ENCODE measurements at regions of chr3 and their contacts with region 1.

Region 1: GRCh38 chr3:31384117-31384516 is 148.6 kb upstream of the STT3B start:
- DNase-seq: no peak
- H3K4me3 ChIP-seq: no peak overlapping the region
- H3K27ac ChIP-seq: no peak overlapping the region
- H3K4me1 ChIP-seq: no peaks in the 10 kb centered on the region
- H3K27me3 ChIP-seq: no peaks in the 10 kb centered on the region
- CTCF ChIP-seq: no peak
- POLR2A ChIP-seq: no peak

Region 2: GRCh38 chr3:33016851-33017405 is 1632.8 kb after region 1 on chr3:
- intact Hi-C with region 1: loop called (anchors 10 kb)
- DNase-seq: no peak
- H3K4me3 ChIP-seq: no peak overlapping the region
- H3K27ac ChIP-seq: no peak overlapping the region
- H3K4me1 ChIP-seq: no peaks in the 10 kb centered on the region
- H3K27me3 ChIP-seq: no peaks in the 10 kb centered on the region
- CTCF ChIP-seq: no peak
- POLR2A ChIP-seq: no peak

Measured in breast epithelium (tissue), 4 donors.